Endothelial cell of umbilical vein (primary cell): ENCODE measurements at regions of chr6 and their contacts with region 1.

Region 1: DNA sequence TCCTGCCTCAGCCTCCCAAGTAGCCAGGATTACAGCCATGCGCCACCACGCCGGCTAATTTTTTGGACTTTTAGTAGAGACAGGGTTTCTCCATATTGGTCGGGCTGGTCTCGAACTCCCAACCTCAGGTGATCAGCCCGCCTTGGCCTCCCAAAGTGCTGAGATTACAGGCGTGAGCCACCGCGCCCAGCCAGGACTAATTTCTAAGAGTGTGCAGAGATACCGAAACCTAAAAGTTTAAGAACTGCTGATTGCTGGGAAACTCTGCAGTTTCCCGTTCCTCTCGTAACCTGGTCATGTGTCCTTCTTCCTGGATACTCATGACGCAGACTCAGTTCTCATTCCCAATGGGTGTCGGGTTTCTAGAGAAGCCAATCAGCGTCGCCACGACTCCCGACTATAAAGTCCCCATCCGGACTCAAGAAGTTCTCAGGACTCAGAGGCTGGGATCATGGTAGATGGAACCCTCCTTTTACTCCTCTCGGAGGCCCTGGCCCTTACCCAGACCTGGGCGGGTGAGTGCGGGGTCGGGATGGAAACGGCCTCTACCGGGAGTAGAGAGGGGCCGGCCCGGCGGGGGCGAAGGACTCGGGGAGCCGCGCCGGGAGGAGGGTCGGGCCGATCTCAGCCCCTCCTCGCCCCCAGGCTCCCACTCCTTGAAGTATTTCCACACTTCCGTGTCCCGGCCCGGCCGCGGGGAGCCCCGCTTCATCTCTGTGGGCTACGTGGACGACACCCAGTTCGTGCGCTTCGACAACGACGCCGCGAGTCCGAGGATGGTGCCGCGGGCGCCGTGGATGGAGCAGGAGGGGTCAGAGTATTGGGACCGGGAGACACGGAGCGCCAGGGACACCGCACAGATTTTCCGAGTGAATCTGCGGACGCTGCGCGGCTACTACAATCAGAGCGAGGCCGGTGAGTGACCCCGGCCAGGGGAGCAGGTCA is at the start of gene HLA-E:
- DNase-seq: peak; percentile 99
- H3K4me3 ChIP-seq: peak within 1 kb of the TSS; percentile 76 to 94 (median 92)
- H3K27ac ChIP-seq: peak within 1 kb of the TSS; percentile 92
- H3K4me1 ChIP-seq: peaks cover 20% of the 10 kb centered on the region
- H3K27me3 ChIP-seq: no peaks in the 10 kb centered on the region
- CTCF ChIP-seq: no peak
- POLR2A ChIP-seq: peak; percentile 99
- total RNA-seq, gene HLA-E: 249 and 271 TPM in 2 replicates

Region 2: DNA sequence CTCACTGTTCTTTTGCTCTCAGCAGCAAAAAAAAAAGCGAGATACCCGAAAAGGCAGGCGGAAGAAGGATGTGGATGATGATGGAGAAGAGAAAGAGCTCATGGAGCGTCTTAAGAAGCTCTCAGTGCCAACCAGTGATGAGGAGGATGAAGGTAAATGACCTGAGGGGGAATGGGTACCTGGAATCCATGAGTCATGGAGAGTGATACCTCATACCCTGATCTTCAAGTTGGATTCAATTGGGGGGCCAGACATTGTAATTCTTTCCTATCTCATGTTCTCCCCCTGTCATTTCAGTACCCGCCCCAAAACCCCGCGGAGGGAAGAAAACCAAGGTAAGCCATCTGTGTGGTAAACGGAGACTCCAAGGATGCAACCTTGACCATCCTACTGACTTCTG is 88.7 kb after region 1 on chr6:
- CTCF ChIA-PET with region 1: no interaction called
- POLR2A ChIA-PET with region 1: no interaction called
- dilution Hi-C with region 1: no loop called
- intact Hi-C with region 1: no loop called
- DNase-seq: no peak
- H3K4me3 ChIP-seq: no peak overlapping the region
- H3K27ac ChIP-seq: no peak overlapping the region
- H3K4me1 ChIP-seq: no peaks in the 10 kb centered on the region
- H3K27me3 ChIP-seq: no peaks in the 10 kb centered on the region
- CTCF ChIP-seq: no peak
- POLR2A ChIP-seq: no peak

Region 3: GRCh38 chr6:30877419-30878371 is 388.3 kb after region 1 on chr6:
- CTCF ChIA-PET with region 1: no interaction called
- POLR2A ChIA-PET with region 1: no interaction called
- dilution Hi-C with region 1: no loop called
- intact Hi-C with region 1: loop called (anchors 10 kb)
- DNase-seq: peak; percentile 92
- H3K4me3 ChIP-seq: peak overlapping the region in 2 of 3 experiments; percentile 9 to 31
- H3K27ac ChIP-seq: peak overlapping the region; percentile 81
- H3K4me1 ChIP-seq: peaks cover 23% of the 10 kb centered on the region
- H3K27me3 ChIP-seq: peaks cover 0 to 2% of the 10 kb centered on the region in 2 experiments
- CTCF ChIP-seq: peak; percentile 83 to 90
- POLR2A ChIP-seq: peak; percentile 49